ENCODE measurements at regions of chr3 and their contacts with region 1.

Region 1: GRCh38 chr3:154095832-154096421 is 25.3 kb upstream of the ARHGEF26 start:
- DNase-seq: no peak
- ATAC-seq: no peak

Region 2: GRCh38 chr3:153903430-153903829 is 192.5 kb before region 1 on chr3:
- intact Hi-C with region 1: no loop called
- DNase-seq: no peak
- ATAC-seq: no peak

Region 3: DNA sequence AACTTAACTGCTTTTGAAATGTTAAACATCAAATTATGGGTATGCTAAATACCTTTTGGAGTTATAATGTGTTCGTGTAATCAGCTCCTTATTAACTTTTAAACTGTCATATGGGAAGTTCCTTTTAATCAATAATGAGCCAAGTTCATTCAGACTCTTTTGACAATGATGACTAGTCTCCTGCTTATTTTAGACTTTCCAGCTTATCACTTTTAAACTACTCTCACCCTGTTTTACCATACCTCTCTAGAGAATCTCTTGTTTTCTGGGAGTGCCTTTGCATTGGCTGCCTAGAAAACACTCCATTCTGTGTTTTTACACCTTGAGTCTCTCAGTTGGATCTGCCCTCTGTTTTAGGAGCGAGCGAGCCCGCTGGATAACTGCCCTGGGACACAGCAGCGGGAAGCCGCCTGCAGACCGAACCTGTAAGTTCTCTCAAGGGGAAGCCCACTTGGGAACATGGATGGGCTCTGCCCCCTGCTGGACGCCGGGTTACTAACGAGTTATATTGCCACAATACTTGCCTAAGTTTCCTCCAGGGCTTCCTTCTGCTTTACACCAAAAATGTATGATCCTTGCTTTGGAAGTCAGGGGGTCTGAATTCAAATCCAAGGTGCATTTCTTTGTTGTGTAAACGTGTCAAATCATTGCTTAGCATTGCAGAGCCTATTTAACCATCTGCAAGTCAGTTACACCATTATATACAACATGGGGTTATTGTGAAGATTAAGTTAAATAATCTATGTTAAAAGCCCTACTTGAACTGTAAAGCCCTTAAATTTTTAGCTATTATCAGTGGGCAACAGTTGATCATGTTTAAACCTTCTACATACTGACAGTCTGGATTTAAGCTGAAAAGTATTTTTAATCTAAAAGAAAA is 157.1 kb after region 1 on chr3:
- intact Hi-C with region 1: loop called (anchors 5 kb)
- DNase-seq: peak; percentile 93
- ATAC-seq: peak; percentile 95

Measured in Right ventricle myocardium superior (tissue), 1 donor.